ENCODE measurements at regions of chr18 and their contacts with region 1.

Region 1: DNA sequence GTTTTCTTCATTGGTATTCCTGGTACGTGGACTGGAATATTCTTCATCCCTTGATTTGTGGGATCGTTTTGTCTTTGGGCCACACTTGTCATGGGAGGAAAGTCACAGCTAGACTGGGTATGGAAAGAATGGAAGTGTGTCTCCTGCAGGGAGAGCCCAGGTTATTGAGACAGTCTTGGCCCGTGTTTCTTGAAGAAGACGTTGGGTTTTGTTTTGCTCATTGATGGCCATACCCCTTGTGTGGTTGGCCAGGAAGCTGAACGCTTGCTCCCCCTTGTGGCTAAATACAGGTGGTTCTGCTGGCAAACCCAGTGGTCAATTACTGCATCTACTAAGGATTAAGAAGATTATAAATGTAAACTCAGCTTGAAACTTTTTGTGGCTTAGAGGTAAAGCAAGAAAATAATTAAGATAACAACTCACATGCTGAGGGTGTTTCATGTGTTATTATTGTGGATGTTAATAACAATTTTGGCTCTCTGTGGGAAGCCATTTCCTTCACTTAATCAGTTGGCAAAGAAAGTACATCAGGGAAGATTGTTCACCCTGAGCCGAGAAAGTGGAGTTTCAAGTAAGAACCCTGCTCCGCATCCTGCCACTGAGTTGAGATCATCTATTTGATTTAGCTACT is 91.8 kb downstream of the NEDD4L start:
- H3K4me3 ChIP-seq: no peak overlapping the region
- H3K27ac ChIP-seq: no peak overlapping the region; the same call in 1 of the 2 replicates
- H3K4me1 ChIP-seq: peaks cover 11% of the 10 kb centered on the region
- CTCF ChIP-seq: peak; percentile 70

Region 2: DNA sequence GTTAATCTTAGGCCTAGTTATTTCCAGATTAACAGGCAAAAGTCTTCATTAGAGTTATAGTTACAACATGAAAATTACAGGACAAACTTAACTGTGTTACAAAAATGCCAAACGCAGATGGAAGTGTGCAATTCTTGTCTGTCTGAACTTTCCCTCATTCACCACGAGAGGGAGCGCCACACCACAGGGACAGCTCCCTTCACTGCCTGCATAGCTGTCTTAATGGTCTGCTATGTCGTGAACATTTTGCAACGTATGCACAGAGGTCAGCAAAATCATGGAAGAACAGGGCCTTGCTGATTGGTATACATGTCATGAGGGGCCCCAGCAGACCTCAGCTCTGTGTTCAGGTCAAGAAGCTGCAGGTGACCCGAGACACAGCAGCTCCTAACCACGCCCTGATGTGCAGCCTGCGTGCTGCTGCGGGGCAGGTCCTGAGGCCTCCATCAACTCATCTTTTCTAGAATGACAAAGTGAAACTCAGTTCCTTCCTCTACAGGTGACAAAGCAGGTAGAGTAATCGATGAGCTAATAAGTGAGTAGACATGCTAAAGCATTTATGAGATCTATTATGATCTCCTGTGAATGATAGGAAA is 253.9 kb before region 1 on chr18:
- CTCF ChIA-PET with region 1: interaction called, 30 read pairs
- POLR2A ChIA-PET with region 1: no interaction called
- H3K4me3 ChIP-seq: no peak overlapping the region
- H3K27ac ChIP-seq: no peak overlapping the region
- H3K4me1 ChIP-seq: no peaks in the 10 kb centered on the region
- CTCF ChIP-seq: peak; percentile 88

Region 3: GRCh38 chr18:58043491-58044379 is 92.1 kb before region 1 on chr18 and contains the start of gene NEDD4L:
- CTCF ChIA-PET with region 1: interaction called, 31 read pairs
- POLR2A ChIA-PET with region 1: interaction called, 4 read pairs
- H3K4me3 ChIP-seq: peak within 1 kb of the TSS; percentile 81
- H3K27ac ChIP-seq: peak within 1 kb of the TSS; percentile 95
- H3K4me1 ChIP-seq: peaks cover 17% of the 10 kb centered on the region
- CTCF ChIP-seq: peak; percentile 86

Region 4: DNA sequence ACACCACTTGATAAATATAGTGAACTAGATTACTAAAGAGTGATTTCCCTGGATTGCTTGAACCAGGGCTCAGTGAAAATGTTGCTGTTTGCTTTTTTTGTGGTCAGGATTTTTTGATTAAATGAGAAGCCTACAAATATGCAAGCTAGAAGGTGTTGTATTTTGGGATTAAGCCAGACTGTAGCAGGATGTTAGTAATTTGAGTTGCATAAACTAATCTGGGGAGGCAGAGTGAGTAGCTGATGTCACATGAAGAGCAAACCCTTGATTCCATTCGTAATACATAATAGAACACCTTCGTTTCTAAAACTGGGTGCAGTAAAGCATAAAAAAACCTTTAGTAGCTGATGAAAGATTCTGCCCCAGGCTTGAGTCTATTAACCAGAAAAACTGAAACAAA is 59.8 kb before region 1 on chr18:
- CTCF ChIA-PET with region 1: interaction called, 10 read pairs
- POLR2A ChIA-PET with region 1: no interaction called
- H3K4me3 ChIP-seq: no peak overlapping the region
- H3K27ac ChIP-seq: no peak overlapping the region
- H3K4me1 ChIP-seq: peaks cover 6% of the 10 kb centered on the region
- CTCF ChIP-seq: no peak

Region 5: DNA sequence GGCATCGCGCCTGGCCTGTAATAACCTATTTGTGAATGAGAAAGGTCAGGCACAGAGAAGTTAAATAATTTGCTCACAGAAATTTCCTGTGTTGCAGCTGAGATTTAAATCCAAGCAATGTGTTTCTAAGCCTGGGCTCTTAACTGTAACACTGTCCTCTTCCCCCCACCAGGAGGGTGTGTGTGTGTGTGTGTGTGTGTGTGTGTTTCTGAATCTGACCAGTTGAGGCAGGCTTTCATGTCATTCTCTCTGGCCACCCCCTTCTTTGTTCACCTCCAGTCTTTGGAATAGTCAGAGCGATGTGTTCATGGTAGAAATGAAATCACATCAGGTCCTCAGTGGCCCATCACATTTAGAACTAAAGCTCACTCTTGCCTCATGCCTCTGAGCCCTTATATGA is 10.6 kb before region 1 on chr18:
- CTCF ChIA-PET with region 1: interaction called, 68 read pairs
- POLR2A ChIA-PET with region 1: no interaction called
- H3K4me3 ChIP-seq: no peak overlapping the region
- H3K27ac ChIP-seq: no peak overlapping the region
- H3K4me1 ChIP-seq: no peaks in the 10 kb centered on the region
- CTCF ChIP-seq: peak; percentile 72

Region 6: DNA sequence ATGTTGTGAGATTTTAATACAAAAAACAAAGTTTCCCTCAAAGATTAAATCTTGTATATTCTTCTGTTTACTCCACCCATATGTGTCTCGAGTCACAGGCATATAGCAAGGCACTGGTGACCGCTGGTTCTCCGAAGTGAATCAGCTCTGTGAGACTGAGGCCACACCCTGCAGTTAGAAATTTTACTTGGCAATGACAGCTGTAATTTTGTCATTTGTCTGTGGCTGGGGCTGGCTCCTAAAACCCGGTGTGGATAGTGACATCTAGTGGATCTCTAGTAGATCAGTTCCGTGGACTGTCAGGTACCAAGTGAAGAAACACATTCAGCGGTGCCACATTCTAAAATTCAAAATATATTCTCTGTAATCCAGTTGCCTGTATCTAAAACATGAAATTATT is 186.2 kb after region 1 on chr18:
- CTCF ChIA-PET with region 1: interaction called, 13 read pairs
- POLR2A ChIA-PET with region 1: no interaction called
- H3K4me3 ChIP-seq: no peak overlapping the region
- H3K27ac ChIP-seq: no peak overlapping the region
- H3K4me1 ChIP-seq: peaks cover 18% of the 10 kb centered on the region
- CTCF ChIP-seq: peak; percentile 67

Measured in HEK293 (cell line).